Caco-2 (cell line): ENCODE measurements at regions of chrX and their contacts with region 1.

Region 1: DNA sequence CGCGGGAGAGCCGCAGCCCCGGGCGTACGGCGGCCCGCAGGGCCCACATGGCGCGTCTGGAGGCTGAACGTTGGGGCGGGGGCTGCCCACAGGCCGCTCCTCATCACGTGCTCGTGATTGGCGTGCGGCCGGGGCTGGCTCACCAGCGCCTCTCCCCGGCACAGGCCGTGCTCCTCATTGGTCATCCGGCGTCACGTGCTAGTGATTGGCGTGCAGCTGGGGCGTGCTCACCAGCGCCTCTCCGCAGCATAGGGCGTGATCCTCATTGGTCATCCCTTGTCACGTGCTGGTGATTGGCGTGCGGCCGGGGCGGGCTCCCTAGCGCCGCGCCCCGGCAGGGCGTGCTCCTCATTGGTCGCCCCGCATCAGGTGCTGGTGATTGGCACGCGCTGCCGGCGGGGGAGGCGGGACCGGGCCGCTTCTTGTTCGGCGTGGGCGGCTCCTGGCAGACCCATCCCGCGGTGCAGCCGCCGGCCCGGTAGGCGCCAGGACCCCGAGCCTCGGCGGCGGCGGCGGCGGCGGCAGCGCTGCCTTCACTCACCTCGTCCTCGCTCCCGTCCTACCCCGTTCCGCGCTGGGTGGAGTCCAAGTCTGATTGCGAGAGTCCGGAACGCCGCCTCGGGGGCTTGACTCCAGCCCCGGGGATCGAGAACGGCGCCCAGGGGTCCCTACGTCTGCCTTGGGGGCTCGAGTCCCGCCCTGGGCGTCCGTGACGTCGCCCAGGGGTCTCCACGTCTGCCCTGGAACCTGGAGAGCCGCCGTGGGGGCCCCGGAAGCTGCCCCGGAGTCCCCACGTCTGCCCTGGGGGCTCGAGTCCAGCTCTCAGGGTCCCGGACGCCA is at the start of gene GTPBP6:
- DNase-seq: peak; percentile 99
- H3K4me3 ChIP-seq: peak within 1 kb of the TSS; percentile 90
- H3K4me3 Mint-ChIP-seq: peak within 1 kb of the TSS; percentile 72
- H3K27ac Mint-ChIP-seq: peak within 1 kb of the TSS; percentile 83
- H3K4me1 ChIP-seq: no peaks in the 10 kb centered on the region
- H3K4me1 Mint-ChIP-seq: peaks cover 7% of the 10 kb centered on the region
- H3K27me3 ChIP-seq: no peaks in the 10 kb centered on the region
- H3K27me3 Mint-ChIP-seq: no peaks in the 10 kb centered on the region
- CTCF ChIP-seq: no peak
- total RNA-seq, gene GTPBP6: 72.4 and 75.0 TPM in 2 replicates

Region 2: GRCh38 chrX:259692-260348 is 59.1 kb before region 1 on chrX:
- CTCF ChIA-PET with region 1: no interaction called
- POLR2A ChIA-PET with region 1: no interaction called
- intact Hi-C with region 1: no loop called
- DNase-seq: peak; percentile 49 to 62
- H3K4me3 ChIP-seq: no peak overlapping the region
- H3K4me3 Mint-ChIP-seq: no peak overlapping the region
- H3K27ac Mint-ChIP-seq: peak overlapping the region; percentile 48
- H3K4me1 ChIP-seq: peaks cover 32% of the 10 kb centered on the region
- H3K4me1 Mint-ChIP-seq: peaks cover 29% of the 10 kb centered on the region
- H3K27me3 ChIP-seq: no peaks in the 10 kb centered on the region
- H3K27me3 Mint-ChIP-seq: no peaks in the 10 kb centered on the region
- CTCF ChIP-seq: no peak

Region 3: GRCh38 chrX:275967-276580 is 42.9 kb before region 1 on chrX:
- CTCF ChIA-PET with region 1: no interaction called
- POLR2A ChIA-PET with region 1: no interaction called
- intact Hi-C with region 1: loop called (anchors 2 kb)
- DNase-seq: peak; percentile 83 to 84
- H3K4me3 ChIP-seq: peak overlapping the region; percentile 55
- H3K4me3 Mint-ChIP-seq: peak overlapping the region; percentile 82
- H3K27ac Mint-ChIP-seq: peak overlapping the region; percentile 78
- H3K4me1 ChIP-seq: peaks cover 14% of the 10 kb centered on the region; the same call in 1 of the 2 replicates
- H3K4me1 Mint-ChIP-seq: peaks cover 14% of the 10 kb centered on the region
- H3K27me3 ChIP-seq: no peaks in the 10 kb centered on the region
- H3K27me3 Mint-ChIP-seq: no peaks in the 10 kb centered on the region
- CTCF ChIP-seq: peak in 1 of 2 experiments; percentile 11

Region 4: GRCh38 chrX:283115-283845 is 35.7 kb before region 1 on chrX:
- CTCF ChIA-PET with region 1: no interaction called
- POLR2A ChIA-PET with region 1: no interaction called
- intact Hi-C with region 1: loop called (anchors 1 kb)
- DNase-seq: peak; percentile 92 to 95
- H3K4me3 ChIP-seq: peak overlapping the region; percentile 57
- H3K4me3 Mint-ChIP-seq: peak overlapping the region; percentile 79
- H3K27ac Mint-ChIP-seq: peak overlapping the region; percentile 87
- H3K4me1 ChIP-seq: peaks cover 19% of the 10 kb centered on the region; the same call in 1 of the 2 replicates
- H3K4me1 Mint-ChIP-seq: peaks cover 14% of the 10 kb centered on the region
- H3K27me3 ChIP-seq: no peaks in the 10 kb centered on the region
- H3K27me3 Mint-ChIP-seq: no peaks in the 10 kb centered on the region
- CTCF ChIP-seq: no peak

Region 5: DNA sequence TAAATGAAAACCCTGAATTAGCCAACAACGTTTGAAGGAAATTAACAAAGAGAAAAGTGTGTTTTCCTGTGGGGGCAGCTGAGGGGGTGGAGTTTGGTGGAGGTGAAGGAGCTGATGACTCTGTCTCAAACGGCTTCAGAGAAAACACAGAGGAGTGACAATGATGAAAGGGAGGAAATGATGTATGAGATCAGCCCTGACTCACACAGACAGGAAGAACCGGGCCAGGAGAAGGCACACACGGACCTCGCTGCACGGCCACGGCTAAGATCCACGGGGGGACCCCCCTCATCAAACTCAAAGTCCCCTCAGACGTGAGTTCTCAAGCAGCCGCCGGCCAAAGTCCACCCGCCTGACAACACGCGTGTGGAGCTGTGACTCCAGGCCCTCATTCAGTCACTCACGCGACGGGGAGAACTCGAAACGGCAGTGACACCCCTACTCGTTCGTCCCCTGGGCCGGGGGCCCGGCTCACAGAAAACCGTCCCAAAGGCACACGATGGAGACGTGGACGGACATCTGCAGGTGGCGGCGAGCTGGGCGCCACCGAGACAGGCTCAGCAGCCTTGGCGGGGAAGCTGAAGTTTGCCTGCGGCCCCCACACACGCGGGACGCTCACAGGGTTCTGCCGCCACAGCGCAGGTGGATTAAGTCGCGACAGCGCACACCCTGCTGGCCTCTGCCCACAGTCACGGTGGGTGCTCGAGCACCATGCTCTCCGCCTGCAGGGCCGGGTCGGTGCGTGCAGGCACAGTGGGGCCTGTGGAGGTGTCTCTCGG is 38.9 kb after region 1 on chrX:
- CTCF ChIA-PET with region 1: no interaction called
- POLR2A ChIA-PET with region 1: no interaction called
- intact Hi-C with region 1: no loop called
- DNase-seq: no peak
- H3K4me3 ChIP-seq: no peak overlapping the region
- H3K4me3 Mint-ChIP-seq: no peak overlapping the region
- H3K27ac Mint-ChIP-seq: no peak overlapping the region
- H3K4me1 ChIP-seq: no peaks in the 10 kb centered on the region
- H3K4me1 Mint-ChIP-seq: no peaks in the 10 kb centered on the region
- H3K27me3 ChIP-seq: no peaks in the 10 kb centered on the region
- H3K27me3 Mint-ChIP-seq: no peaks in the 10 kb centered on the region
- CTCF ChIP-seq: no peak

Region 6: DNA sequence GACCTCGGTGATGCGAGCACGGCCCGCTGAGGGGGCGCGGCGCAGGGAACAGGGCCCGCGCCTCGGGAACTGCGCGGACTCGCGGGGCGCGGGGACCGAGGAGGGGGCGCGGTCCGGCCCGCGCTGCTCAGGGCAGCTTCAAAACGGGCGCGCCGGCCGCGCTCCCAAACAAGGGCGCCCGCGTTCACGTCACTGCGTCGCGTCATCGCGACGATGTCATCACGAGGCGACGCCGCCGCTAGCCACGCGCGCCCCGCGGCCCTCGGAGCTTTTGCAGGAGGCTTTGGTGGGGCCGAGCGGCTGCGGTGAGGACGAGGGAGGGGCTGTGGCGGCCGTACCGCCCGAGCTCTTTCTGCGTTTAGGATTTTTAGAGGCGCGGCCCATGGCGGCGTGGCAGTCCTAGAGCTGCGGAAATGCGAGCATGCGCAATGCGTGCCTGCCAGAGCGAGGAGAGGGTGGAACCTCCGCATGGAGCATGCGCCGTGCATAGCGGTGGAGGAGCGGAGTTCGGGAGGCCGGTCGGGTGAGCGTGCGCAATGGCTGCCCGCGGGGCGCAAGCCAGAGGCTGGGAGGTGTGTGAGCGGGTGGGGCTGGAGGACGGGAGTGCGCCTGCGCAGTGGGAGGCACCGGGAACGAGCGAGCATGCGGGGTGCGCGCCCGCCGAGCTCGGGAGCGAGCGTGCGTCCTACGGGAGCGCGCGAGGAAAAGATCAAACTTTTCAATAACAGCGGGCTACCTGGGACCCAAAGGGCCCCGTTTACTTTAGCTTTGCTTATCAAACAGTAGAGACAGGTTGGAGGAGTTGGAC is 68.0 kb after region 1 on chrX and contains the start of gene PPP2R3B:
- CTCF ChIA-PET with region 1: no interaction called
- POLR2A ChIA-PET with region 1: no interaction called
- intact Hi-C with region 1: loop called (anchors 2 kb)
- DNase-seq: peak; percentile 99
- H3K4me3 ChIP-seq: peak within 1 kb of the TSS; percentile 99
- H3K4me3 Mint-ChIP-seq: peak within 1 kb of the TSS; percentile 96
- H3K27ac Mint-ChIP-seq: peak within 1 kb of the TSS; percentile 100
- H3K4me1 ChIP-seq: no peaks in the 10 kb centered on the region
- H3K4me1 Mint-ChIP-seq: no peaks in the 10 kb centered on the region
- H3K27me3 ChIP-seq: no peaks in the 10 kb centered on the region
- H3K27me3 Mint-ChIP-seq: no peaks in the 10 kb centered on the region
- CTCF ChIP-seq: no peak
- total RNA-seq, gene PPP2R3B: 57.9 and 71.3 TPM in 2 replicates

Region 7: GRCh38 chrX:683572-683971 is 364.6 kb after region 1 on chrX:
- CTCF ChIA-PET with region 1: no interaction called
- POLR2A ChIA-PET with region 1: no interaction called
- intact Hi-C with region 1: no loop called
- DNase-seq: no peak
- H3K4me3 ChIP-seq: no peak overlapping the region
- H3K4me3 Mint-ChIP-seq: no peak overlapping the region
- H3K27ac Mint-ChIP-seq: no peak overlapping the region
- H3K4me1 ChIP-seq: no peaks in the 10 kb centered on the region
- H3K4me1 Mint-ChIP-seq: no peaks in the 10 kb centered on the region
- H3K27me3 ChIP-seq: no peaks in the 10 kb centered on the region
- H3K27me3 Mint-ChIP-seq: peaks cover 7% of the 10 kb centered on the region
- CTCF ChIP-seq: no peak

Region 8: GRCh38 chrX:1453951-1454785 is 1135.2 kb after region 1 on chrX:
- CTCF ChIA-PET with region 1: no interaction called
- POLR2A ChIA-PET with region 1: no interaction called
- intact Hi-C with region 1: loop called (anchors 2 kb)
- DNase-seq: peak; percentile 77 to 86
- H3K4me3 ChIP-seq: peak overlapping the region; percentile 25
- H3K4me3 Mint-ChIP-seq: no peak overlapping the region
- H3K27ac Mint-ChIP-seq: no peak overlapping the region
- H3K4me1 ChIP-seq: no peaks in the 10 kb centered on the region
- H3K4me1 Mint-ChIP-seq: no peaks in the 10 kb centered on the region
- H3K27me3 ChIP-seq: no peaks in the 10 kb centered on the region
- H3K27me3 Mint-ChIP-seq: peaks cover 2% of the 10 kb centered on the region
- CTCF ChIP-seq: peak; percentile 90 to 96

Region 9: GRCh38 chrX:1591102-1591900 is 1272.3 kb after region 1 on chrX and contains the start of gene AKAP17A:
- CTCF ChIA-PET with region 1: no interaction called
- POLR2A ChIA-PET with region 1: no interaction called
- intact Hi-C with region 1: loop called (anchors 5 kb)
- DNase-seq: peak; percentile 96 to 99
- H3K4me3 ChIP-seq: peak within 1 kb of the TSS; percentile 96
- H3K4me3 Mint-ChIP-seq: peak within 1 kb of the TSS; percentile 87
- H3K27ac Mint-ChIP-seq: peak within 1 kb of the TSS; percentile 84
- H3K4me1 ChIP-seq: peaks cover 4% of the 10 kb centered on the region; the same call in 1 of the 2 replicates
- H3K4me1 Mint-ChIP-seq: no peaks in the 10 kb centered on the region
- H3K27me3 ChIP-seq: no peaks in the 10 kb centered on the region
- H3K27me3 Mint-ChIP-seq: no peaks in the 10 kb centered on the region
- CTCF ChIP-seq: peak in 1 of 2 experiments; percentile 6
- total RNA-seq, gene AKAP17A: 39.9 and 42.2 TPM in 2 replicates